GM13976 (cell line): ENCODE measurements at regions of chr19 and their contacts with region 1.

Region 1: GRCh38 chr19:39125554-39126311 is at the start of gene PAK4:
- DNase-seq: peak; percentile 100
- CTCF ChIP-seq: no peak

Region 2: DNA sequence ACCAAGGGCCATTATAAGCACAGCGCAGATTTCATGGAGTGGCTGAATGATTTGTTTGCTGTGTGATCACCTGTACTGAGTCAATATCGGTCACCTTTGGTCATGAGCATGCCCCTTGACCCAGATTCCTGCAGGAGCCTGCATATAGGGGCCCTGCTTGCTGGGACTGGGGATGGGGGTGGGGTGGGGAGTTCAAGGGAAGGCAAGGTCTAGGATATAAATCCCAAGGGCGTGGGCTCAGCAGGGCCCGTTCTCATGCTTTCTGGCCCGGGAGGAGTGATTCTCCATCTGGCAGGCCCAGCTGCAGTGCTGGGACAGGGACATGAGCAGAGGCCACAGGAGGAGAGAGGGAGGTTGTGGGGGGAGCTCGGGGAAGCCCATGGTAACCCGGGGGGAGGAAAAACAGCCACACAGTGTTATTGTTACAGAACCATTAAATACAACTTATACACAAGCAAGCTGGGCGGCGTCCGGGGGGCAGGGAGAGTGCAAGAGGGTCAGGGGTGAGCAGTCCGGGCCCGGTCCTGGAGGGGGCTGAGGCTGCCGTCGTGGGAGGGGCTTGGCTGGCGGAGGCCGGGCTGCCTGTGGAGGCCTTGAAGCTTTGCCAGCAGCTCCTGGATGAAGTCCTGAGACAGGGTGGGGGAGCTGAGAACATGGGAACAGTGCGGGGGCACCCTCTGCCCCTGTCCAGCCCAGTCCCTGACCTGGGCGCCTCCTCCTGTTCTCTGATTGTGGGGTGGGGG is 874.7 kb before region 1 on chr19:
- in situ Hi-C with region 1: no loop called
- DNase-seq: no peak
- CTCF ChIP-seq: no peak

Region 3: DNA sequence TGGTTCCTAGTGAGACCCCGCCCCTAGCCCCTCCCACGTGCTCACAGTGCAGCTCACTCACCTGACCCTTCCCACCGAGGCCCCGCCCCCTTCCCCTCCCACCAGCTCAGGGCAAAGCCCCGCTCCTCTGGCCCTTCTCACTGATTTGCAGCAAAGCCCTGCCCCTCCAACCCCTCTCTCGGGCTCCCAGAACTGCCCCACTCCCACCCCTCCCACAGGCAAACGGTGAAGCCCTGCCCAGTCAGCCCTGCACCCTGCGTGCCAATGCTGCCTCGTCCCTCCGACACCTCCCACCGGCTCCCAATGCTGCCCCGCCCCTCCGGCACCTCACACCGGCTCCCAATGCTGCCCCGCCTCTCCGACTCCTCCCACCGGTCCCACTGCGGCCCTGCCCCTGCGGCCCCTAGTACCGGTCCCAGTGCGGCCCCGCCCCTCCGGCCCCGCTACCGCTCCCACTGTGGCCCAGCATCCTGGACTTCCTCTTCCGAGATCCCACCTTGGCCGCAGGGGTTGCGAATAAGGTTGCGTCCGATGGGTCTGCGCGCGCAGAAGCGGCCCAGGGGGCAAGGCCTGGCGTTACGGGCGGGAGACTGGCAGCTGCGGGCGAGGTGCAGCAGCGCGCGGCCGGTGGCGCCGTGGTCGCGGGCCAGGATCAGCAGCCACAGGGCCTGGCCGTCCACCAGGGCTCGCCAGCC is 94.2 kb before region 1 on chr19:
- in situ Hi-C with region 1: no loop called
- DNase-seq: peak; percentile 90
- CTCF ChIP-seq: no peak

Region 4: DNA sequence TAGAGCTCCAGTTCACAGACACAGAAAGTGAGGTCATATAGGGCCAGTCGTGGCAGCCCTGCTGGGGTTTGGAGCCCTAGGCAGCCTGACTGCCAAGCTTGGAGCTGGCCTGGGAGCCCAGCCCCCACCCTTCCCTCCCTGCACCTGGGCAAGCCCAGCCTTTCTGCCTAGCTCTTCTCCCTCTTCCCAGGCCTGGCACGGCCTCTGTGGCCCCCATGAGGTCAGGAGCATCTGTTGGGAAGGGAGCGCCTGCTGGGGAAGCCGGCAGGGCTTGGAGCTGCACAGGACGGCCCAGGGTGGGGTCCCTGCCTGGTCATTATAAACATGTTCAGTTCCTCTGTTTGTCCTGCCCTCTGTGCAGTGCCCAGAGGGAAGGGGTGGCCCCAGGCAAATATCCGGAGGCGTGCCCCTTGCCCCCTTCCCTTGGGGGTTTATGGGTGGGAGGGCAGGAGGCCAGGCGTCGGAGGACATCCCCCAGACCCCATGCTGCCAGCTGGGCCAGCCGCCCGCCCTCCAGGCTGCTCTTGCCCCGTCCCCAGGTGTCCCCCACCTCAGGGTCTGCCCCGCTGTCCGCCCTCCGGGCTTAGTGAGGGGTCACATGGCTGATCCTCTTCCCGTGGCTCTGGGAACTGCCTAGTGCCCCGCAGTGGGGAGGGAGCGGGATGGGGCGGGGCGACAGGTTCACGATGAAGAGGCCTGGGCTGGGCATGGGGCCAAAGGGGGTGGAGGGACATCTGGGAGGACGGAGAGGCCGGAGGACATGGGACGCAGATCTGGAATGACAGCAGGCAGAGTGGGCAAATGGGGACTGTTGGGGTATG is 41.0 kb after region 1 on chr19:
- in situ Hi-C with region 1: no loop called
- DNase-seq: no peak
- CTCF ChIP-seq: no peak

Region 5: DNA sequence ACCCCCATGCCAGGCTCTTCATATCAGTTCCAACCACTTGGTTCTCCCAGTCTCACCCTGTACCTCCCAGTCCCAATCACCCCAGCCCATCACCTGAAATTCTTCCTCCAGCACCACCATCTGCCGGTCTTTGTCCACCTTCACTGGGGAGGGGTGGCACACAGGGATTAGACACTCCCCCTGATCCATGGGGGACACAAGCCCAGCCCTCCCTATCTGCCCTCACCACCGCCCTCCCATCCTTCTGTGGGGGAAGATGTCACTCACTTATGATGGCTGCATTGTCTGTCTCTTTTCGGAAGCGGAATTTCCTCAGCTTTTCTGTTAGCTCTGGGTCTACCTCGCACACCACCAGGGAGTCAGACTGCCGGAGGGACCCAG is 209.4 kb after region 1 on chr19:
- in situ Hi-C with region 1: loop called (anchors 10 kb)
- DNase-seq: peak; percentile 49
- CTCF ChIP-seq: no peak